ENCODE measurements at regions of chr21 and their contacts with region 1.

Region 1: DNA sequence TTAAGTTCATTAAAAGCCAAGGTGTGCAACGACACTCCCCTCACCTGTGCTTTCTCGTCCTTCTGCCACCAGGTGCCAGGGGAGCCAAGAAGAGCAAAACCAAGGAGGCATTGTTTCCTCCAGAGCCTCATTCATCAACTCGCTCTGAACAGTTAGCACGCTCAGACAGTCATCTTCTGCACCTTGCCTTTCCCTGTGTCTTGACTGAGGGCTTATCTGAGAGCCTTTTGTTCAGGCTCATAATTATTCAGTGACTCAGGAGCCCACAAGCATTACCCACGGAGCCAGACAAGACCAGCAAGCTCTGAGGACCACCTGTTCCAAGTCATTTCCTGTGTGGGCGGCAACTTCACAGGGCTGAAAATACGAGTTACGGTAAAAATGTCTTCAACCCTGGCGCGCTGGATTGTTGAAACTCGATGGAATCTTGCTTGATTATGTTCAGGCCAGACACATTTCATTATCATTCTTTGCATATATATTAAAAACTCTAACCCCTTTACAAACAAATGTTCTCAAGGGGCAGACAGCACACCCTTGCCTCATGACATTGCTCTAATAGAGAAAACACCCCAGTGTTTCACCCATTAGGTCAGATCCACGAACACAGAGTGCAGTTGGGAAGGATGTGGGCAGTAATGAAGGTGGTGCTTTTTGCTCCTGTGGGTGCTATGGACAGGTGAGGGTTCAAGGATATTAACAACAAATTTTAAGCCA is 89.7 kb upstream of the RUNX1 start:
- DNase-seq: peak; percentile 83
- ATAC-seq: peak; percentile 91
- H3K4me3 Mint-ChIP-seq: peak overlapping the region; percentile 65
- H3K27ac Mint-ChIP-seq: peak overlapping the region; percentile 93
- H3K4me1 Mint-ChIP-seq: peaks cover 38% of the 10 kb centered on the region
- H3K27me3 Mint-ChIP-seq: no peaks in the 10 kb centered on the region

Region 2: GRCh38 chr21:35159881-35160280 is 21.1 kb after region 1 on chr21:
- CTCF ChIA-PET with region 1: no interaction called
- POLR2A ChIA-PET with region 1: no interaction called
- intact Hi-C with region 1: no loop called
- DNase-seq: no peak
- ATAC-seq: no peak
- H3K4me3 Mint-ChIP-seq: no peak overlapping the region
- H3K27ac Mint-ChIP-seq: no peak overlapping the region
- H3K4me1 Mint-ChIP-seq: peaks cover 7% of the 10 kb centered on the region
- H3K27me3 Mint-ChIP-seq: no peaks in the 10 kb centered on the region

Region 3: DNA sequence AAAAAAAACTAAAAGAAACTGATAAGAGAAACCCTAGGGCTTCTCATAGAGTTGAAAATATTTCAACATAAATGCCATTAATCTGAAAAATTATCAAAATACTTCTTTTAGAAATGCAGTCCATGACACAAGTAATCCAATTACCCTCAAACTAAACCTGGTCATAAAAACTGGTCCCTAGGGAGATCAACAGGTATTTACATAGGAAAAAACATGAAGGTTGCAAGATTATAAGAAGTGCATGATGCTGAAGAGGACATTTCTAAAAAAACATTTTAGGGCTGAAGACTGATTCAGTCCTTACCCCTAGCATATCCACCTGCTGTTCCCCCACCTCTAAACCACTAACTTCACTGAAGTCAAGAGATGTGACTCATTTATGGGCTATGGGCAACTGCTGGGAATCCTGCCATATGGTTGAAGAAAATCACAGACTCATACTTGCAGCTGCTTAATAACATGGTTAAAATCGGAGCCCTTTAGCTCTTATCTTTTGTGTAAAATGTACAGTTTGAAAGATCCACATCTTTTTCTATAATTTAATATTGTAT is 41.2 kb after region 1 on chr21:
- CTCF ChIA-PET with region 1: no interaction called
- POLR2A ChIA-PET with region 1: no interaction called
- intact Hi-C with region 1: loop called in 1 of 2 experiments (anchors 1 kb)
- DNase-seq: peak; percentile 28
- ATAC-seq: peak; percentile 60
- H3K4me3 Mint-ChIP-seq: no peak overlapping the region
- H3K27ac Mint-ChIP-seq: no peak overlapping the region
- H3K4me1 Mint-ChIP-seq: peaks cover 26% of the 10 kb centered on the region
- H3K27me3 Mint-ChIP-seq: no peaks in the 10 kb centered on the region

Region 4: DNA sequence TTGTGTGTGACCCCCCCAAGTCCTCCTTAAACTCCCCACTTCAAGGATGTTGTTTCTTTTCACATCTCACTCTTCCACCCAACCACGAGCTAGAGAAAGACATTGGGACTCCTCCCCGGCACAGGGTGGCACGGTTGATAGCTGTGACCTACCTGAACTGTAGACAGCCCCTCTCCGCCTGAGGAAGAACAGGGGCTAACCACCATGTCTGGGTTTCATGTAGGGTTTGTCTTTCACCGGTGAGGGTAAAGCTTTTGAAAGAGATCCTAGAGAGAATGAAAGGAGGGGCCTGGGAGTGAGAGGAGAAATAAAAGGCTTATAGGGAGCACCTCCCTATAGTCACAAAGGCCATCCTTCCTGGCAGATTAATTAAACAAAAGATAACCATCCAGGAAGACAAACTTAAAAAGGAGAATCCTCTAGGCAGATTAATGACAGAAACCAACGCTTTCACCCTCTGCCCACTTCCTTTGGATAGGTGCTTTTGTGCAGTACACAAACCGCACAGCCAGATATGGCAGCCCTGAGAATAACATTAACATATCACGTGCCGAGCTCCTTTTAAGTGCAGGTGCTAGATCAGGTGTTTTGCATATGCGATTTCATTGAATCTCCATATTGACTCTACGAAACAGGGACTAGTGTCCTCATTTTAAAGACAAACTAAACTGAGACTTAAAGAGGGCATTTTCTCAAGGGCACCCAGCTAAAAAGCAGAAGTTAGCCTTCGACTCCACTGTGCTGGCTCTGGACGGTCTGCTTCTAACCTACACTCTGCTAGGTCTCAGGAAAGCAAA is 88.3 kb after region 1 on chr21:
- CTCF ChIA-PET with region 1: interaction called, 5 read pairs
- POLR2A ChIA-PET with region 1: no interaction called
- intact Hi-C with region 1: loop called in 1 of 2 experiments (anchors 1 kb)
- DNase-seq: peak; percentile 73
- ATAC-seq: peak; percentile 83
- H3K4me3 Mint-ChIP-seq: peak overlapping the region; percentile 45
- H3K27ac Mint-ChIP-seq: peak overlapping the region; percentile 85
- H3K4me1 Mint-ChIP-seq: peaks cover 37% of the 10 kb centered on the region
- H3K27me3 Mint-ChIP-seq: no peaks in the 10 kb centered on the region

Region 5: DNA sequence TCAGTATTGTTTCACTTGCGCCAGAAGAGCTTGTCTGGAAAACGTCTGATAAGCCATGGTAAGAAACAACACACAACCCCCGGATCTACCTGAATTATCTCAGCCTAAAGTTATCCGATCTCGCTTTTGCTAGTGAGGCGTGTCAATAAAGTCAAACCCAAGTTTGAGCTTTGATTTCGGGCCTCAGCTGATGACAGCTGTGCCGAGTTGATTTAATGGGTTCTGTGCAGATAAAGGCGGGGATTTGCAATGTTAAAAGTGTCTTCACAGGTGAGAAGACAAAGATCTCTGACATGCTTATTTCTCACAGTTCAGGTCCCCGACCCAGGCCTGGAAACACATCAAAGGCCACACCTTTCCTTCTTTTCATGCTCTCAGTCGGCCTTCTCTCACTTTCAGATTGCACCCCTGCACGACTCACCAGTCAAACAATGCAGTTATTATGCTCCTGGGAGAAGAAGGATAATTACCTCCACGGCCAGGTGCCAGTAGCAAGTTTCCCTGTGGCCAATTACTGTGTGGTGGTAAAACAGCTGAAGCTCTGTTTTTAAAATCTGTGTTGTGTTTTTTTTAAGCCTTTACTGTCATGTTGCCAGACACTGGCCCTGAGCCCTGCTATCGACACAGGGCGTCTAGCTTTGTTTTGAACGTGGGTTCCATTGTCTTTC is 155.5 kb after region 1 on chr21:
- CTCF ChIA-PET with region 1: no interaction called
- POLR2A ChIA-PET with region 1: no interaction called
- intact Hi-C with region 1: no loop called
- DNase-seq: peak; percentile 22
- ATAC-seq: peak; percentile 23
- H3K4me3 Mint-ChIP-seq: no peak overlapping the region
- H3K27ac Mint-ChIP-seq: no peak overlapping the region
- H3K4me1 Mint-ChIP-seq: peaks cover 17% of the 10 kb centered on the region
- H3K27me3 Mint-ChIP-seq: peaks cover 2% of the 10 kb centered on the region

Region 6: GRCh38 chr21:35358008-35358407 is 219.2 kb after region 1 on chr21:
- CTCF ChIA-PET with region 1: no interaction called
- POLR2A ChIA-PET with region 1: no interaction called
- intact Hi-C with region 1: loop called in 1 of 2 experiments (anchors 5 kb)
- DNase-seq: no peak
- ATAC-seq: peak; percentile 86
- H3K4me3 Mint-ChIP-seq: no peak overlapping the region
- H3K27ac Mint-ChIP-seq: peak overlapping the region; percentile 74
- H3K4me1 Mint-ChIP-seq: peaks cover 15% of the 10 kb centered on the region
- H3K27me3 Mint-ChIP-seq: no peaks in the 10 kb centered on the region